CD4-positive, alpha-beta T cell (primary cell): ENCODE measurements at regions of chr11 and their contacts with region 1.

Region 1: GRCh38 chr11:19712281-19713220 is at the start of gene NAV2:
- DNase-seq: peak; percentile 46 to 89 (median 64)
- ATAC-seq: peak; percentile 98
- H3K4me3 ChIP-seq: peak within 1 kb of the TSS; percentile 70
- H3K4me3 Mint-ChIP-seq: peak within 1 kb of the TSS; percentile 95
- H3K27ac ChIP-seq: peak within 1 kb of the TSS; percentile 10 to 19
- H3K27ac Mint-ChIP-seq: peak within 1 kb of the TSS; percentile 58
- H3K4me1 ChIP-seq: peaks cover 31% of the 10 kb centered on the region
- H3K4me1 Mint-ChIP-seq: peaks cover 30% of the 10 kb centered on the region
- H3K27me3 ChIP-seq: peaks cover 20 to 22% of the 10 kb centered on the region in 2 experiments
- H3K27me3 Mint-ChIP-seq: peaks cover 41% of the 10 kb centered on the region
- CTCF ChIP-seq: no peak
- total RNA-seq, gene NAV2: 0.55 to 0.64 TPM

Region 2: GRCh38 chr11:19240420-19241259 is 471.9 kb before region 1 on chr11 and contains the start of gene E2F8:
- CTCF ChIA-PET with region 1: no interaction called
- POLR2A ChIA-PET with region 1: no interaction called
- intact Hi-C with region 1: loop called in 1 of 2 experiments (anchors 5 kb)
- DNase-seq: peak; percentile 54 to 88 (median 70)
- ATAC-seq: peak; percentile 72
- H3K4me3 ChIP-seq: peak within 1 kb of the TSS; percentile 69
- H3K4me3 Mint-ChIP-seq: peak within 1 kb of the TSS; percentile 85
- H3K27ac ChIP-seq: no peak within 1 kb of the TSS
- H3K27ac Mint-ChIP-seq: peak within 1 kb of the TSS; percentile 59
- H3K4me1 ChIP-seq: peaks cover 24% of the 10 kb centered on the region
- H3K4me1 Mint-ChIP-seq: peaks cover 23% of the 10 kb centered on the region
- H3K27me3 ChIP-seq: peaks cover 37 to 43% of the 10 kb centered on the region in 2 experiments
- H3K27me3 Mint-ChIP-seq: peaks cover 52% of the 10 kb centered on the region
- CTCF ChIP-seq: no peak
- total RNA-seq, gene E2F8: not detected

Region 3: GRCh38 chr11:19723572-19724342 is 11.2 kb after region 1 on chr11:
- CTCF ChIA-PET with region 1: no interaction called
- POLR2A ChIA-PET with region 1: interaction called, 24 read pairs
- intact Hi-C with region 1: no loop called
- DNase-seq: peak in 13 of 14 experiments; percentile 18 to 81 (median 36)
- ATAC-seq: peak; percentile 90
- H3K4me3 ChIP-seq: no peak overlapping the region
- H3K4me3 Mint-ChIP-seq: peak overlapping the region; percentile 57
- H3K27ac ChIP-seq: peak overlapping the region in 1 of 2 donors; percentile 67
- H3K27ac Mint-ChIP-seq: peak overlapping the region; percentile 91
- H3K4me1 ChIP-seq: peaks cover 31% of the 10 kb centered on the region
- H3K4me1 Mint-ChIP-seq: peaks cover 29% of the 10 kb centered on the region
- H3K27me3 ChIP-seq: no peaks in the 10 kb centered on the region
- H3K27me3 Mint-ChIP-seq: peaks cover under 1% of the 10 kb centered on the region
- CTCF ChIP-seq: no peak